Posterior cingulate gyrus (tissue), 11 donors: ENCODE measurements at regions of chr2 and their contacts with region 1.

Region 1: GRCh38 chr2:165203689-165204559 is at the start of gene SCN3A:
- DNase-seq: peak in 5 of 10 donors; percentile 9 to 33 (median 19)

Region 2: GRCh38 chr2:164992818-164993217 is 211.1 kb before region 1 on chr2:
- intact Hi-C with region 1: loop called (anchors 2 kb)
- DNase-seq: peak in 4 of 10 donors; percentile 36 to 63 (median 51)

Region 3: DNA sequence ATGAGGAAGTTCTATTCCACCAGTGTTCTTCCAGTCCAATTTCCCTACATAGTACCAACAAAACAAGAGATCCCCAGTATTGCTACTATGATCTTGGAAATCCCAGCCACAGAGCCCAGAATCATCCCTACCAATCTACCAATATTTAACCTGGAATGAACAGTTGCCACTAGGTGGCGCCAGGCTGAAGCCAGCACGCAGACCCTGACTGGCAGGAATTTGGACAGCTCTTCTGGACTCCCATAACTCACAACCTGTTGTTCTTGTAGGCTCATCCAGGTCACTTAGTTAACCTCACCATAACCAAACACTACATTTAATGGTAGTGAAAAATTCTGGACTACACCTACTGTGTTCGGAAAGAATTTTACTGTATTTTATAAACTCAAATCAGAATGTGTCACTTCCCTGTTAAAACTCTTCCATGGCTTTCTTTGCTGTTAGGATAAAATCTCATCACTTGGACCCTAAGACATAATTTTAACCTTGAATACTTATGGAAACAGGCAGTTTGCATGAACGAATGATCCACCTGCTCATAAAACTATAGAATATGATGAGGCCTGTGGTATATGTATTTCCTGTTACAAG is 188.8 kb before region 1 on chr2:
- intact Hi-C with region 1: loop called (anchors 1 kb)
- DNase-seq: peak in 7 of 10 donors; percentile 59 to 92 (median 74)